ENCODE measurements at regions of chr22 and their contacts with region 1.

Region 1: GRCh38 chr22:20116951-20117645 is at the start of gene TRMT2A:
- DNase-seq: peak; percentile 98 to 99 (median 99)
- H3K4me3 ChIP-seq: peak within 1 kb of the TSS; percentile 79 to 84 (median 82)
- H3K27ac ChIP-seq: peak within 1 kb of the TSS; percentile 70 to 80
- H3K4me1 ChIP-seq: peaks cover 0 to 18% (median 4%) of the 10 kb centered on the region in 3 donors
- H3K27me3 ChIP-seq: no peaks in the 10 kb centered on the region
- CTCF ChIP-seq: no peak
- total RNA-seq, gene TRMT2A: 50.0 TPM

Region 2: DNA sequence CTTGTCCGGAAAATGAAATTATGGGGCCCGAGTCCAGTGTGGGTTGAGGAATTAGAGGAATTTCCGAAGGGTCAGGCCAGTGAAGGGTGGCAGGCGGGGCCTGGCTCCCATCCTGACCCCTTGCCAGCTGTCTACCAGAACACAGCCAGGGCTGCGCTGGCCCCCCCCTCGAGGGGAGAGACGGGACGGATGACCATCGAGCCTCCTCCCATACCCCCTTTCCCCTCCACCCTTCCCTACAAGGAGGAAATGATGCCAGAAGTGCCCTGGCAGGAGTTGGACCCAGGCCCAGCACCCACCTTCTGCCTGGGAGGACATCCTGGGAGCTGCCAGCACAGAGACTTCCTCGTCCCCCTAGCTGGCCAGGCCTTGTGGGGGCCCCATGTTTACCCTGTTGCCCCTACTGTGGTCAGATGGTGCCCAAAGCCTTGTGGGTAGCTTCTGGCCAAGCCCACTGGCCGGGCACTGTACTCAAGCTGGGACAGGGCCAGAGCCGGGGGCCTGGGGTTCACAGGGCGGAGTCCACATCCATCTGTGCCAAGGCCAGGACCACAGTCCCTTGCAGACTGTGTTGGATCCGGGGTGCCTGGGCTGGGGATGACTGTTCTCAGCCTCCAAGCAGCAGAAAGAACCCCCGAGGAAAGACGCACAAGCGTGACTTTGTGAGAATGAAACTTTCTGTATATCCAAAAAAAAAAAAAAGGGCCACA is 121.3 kb before region 1 on chr22:
- intact Hi-C with region 1: no loop called
- DNase-seq: peak in 2 of 5 donors; percentile 62 to 92
- H3K4me3 ChIP-seq: no peak overlapping the region
- H3K27ac ChIP-seq: peak overlapping the region; percentile 76 to 77
- H3K4me1 ChIP-seq: peaks cover 0 to 32% (median 13%) of the 10 kb centered on the region in 3 donors
- H3K27me3 ChIP-seq: no peaks in the 10 kb centered on the region
- CTCF ChIP-seq: no peak

Region 3: DNA sequence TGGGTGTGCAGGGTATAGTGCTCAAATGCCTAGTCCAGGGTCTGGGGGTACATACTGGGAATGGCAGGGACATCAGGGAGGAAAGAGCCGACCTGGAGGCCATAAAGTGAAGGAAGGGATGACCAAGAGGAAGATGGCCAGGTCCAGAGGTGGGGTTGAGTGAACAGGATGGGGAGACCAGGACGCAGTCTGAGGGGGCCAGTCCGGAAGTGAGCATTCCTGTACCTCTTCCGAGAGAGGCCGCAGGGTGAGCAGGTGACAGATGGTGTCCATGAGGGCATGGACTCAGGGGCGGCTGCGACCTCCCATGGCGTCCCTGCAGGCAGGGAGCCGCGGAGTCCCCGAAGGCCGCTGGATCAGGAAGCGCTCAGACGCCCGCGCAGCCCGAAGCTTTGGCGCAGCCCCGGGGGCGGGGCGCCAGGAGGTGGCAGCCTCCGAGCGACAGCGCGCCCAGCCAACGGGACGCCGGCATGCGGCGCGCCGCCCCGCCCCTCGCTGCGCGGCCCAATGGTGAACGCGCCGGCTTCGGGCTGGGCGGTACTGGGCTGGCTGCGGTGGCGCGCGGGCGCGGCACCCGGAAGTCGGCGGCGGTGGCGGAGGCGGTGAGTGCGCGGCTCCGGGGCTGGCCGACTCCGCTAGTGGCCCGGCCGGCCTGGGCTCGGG is 96.4 kb before region 1 on chr22 and contains the start of gene TANGO2:
- intact Hi-C with region 1: loop called (anchors 10 kb)
- DNase-seq: peak; percentile 92 to 97 (median 94)
- H3K4me3 ChIP-seq: peak within 1 kb of the TSS; percentile 63 to 92 (median 85)
- H3K27ac ChIP-seq: peak within 1 kb of the TSS; percentile 84 to 94
- H3K4me1 ChIP-seq: peaks cover 0 to 29% (median 9%) of the 10 kb centered on the region in 3 donors
- H3K27me3 ChIP-seq: peaks cover 15% of the 10 kb centered on the region
- CTCF ChIP-seq: no peak
- total RNA-seq, gene TANGO2: 27.7 TPM

Measured in kidney (tissue), 22 donors.